Activated naive CD8-positive, alpha-beta T cell treated with anti-CD3 and anti-CD28 coated beads, Interleukin-2, amount 10 ng/mL, durations not matched to agents 7 days and 5 days (primary cell): ENCODE measurements at regions of chr2 and their contacts with region 1.

Region 1: DNA sequence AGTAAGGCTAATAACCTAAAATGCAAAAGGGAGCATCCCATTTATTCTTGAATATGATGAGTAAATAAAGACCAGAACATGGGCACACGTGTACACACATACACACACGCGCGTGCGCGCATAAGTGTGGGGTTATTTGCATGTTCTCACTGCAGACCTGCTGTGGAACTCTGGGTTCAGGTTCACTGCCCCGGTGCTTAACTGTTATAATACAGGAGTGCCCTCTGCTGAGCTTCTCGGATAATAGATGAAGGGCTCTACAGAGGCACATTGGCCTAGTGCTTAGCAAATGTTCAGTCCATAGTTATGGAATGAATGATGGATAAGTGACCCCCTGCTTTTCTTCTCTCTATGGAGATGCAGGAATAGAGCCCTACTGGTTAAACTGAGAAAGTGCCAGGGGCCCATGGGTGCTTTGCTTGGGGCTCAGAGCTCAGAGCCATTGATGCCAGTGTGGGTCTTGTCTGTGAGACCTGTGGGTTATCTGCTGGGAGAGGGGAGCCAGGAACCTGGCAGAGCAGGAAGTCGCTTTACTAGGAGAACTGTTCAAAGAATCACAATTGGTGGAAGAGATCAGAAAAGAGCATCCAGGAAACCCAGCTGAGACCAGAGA is 3.6 kb upstream of the ARL4C start:
- DNase-seq: peak; percentile 63
- ATAC-seq: peak; percentile 51
- H3K4me3 Mint-ChIP-seq: no peak overlapping the region
- H3K27ac Mint-ChIP-seq: peak overlapping the region; percentile 49
- H3K4me1 Mint-ChIP-seq: peaks cover 27% of the 10 kb centered on the region
- H3K27me3 Mint-ChIP-seq: peaks cover 10% of the 10 kb centered on the region

Region 2: DNA sequence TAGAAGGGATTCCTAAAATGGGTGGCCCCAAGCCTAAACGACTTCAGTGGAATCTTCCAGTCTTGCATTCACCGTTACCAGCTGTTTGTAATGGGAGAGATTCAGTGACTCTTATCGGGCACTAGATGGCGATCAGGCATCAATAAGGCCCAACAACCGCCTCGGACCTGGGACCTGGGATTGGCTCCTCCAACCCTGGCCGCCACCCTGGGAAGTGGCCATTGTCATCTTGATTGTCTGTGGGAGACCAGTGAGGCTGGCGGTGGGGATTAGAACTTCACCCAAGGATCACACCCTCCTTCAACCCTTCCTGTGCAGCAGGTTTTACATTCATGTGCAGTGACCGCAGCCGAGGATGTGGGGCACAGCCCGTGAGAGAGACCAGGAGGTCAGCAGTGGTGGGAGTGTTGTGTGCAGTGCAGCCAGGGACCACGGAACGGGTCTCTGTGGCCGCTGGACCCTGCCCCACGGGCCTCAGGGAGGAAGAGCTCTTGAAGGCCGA is 364.7 kb before region 1 on chr2:
- POLR2A ChIA-PET with region 1: interaction called, 13 read pairs
- DNase-seq: peak; percentile 57
- ATAC-seq: peak; percentile 79
- H3K4me3 Mint-ChIP-seq: no peak overlapping the region
- H3K27ac Mint-ChIP-seq: peak overlapping the region; percentile 55
- H3K4me1 Mint-ChIP-seq: peaks cover 14% of the 10 kb centered on the region
- H3K27me3 Mint-ChIP-seq: no peaks in the 10 kb centered on the region

Region 3: DNA sequence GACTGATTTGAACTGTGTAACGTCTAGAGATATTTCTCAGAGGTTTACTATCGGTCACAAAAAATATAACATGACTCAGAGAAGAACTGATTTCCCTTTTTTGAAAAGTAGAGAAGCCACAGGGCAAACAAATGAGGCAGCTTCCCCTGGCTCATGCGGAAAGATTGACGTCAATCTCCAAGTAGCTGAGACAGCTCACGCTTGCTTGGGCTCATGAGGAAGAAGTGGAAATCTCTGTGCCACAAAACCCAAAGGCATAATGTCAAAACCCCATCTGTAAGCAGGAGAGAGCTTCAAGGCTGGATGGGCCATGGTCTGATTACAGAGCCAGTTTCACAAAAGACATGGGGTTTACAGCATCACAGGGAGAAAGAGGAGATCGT is 191.7 kb before region 1 on chr2:
- POLR2A ChIA-PET with region 1: interaction called, 37 read pairs
- DNase-seq: no peak
- ATAC-seq: peak; percentile 90
- H3K4me3 Mint-ChIP-seq: peak overlapping the region; percentile 80
- H3K27ac Mint-ChIP-seq: peak overlapping the region; percentile 97
- H3K4me1 Mint-ChIP-seq: peaks cover 48% of the 10 kb centered on the region
- H3K27me3 Mint-ChIP-seq: no peaks in the 10 kb centered on the region

Region 4: GRCh38 chr2:234374736-234375135 is 125.8 kb before region 1 on chr2:
- POLR2A ChIA-PET with region 1: interaction called, 23 read pairs
- DNase-seq: no peak
- ATAC-seq: no peak
- H3K4me3 Mint-ChIP-seq: no peak overlapping the region
- H3K27ac Mint-ChIP-seq: no peak overlapping the region
- H3K4me1 Mint-ChIP-seq: peaks cover 40% of the 10 kb centered on the region
- H3K27me3 Mint-ChIP-seq: no peaks in the 10 kb centered on the region

Region 5: GRCh38 chr2:234437642-234438304 is 62.7 kb before region 1 on chr2:
- POLR2A ChIA-PET with region 1: interaction called, 13 read pairs
- DNase-seq: no peak
- ATAC-seq: no peak
- H3K4me3 Mint-ChIP-seq: peak overlapping the region; percentile 52
- H3K27ac Mint-ChIP-seq: peak overlapping the region; percentile 77
- H3K4me1 Mint-ChIP-seq: peaks cover 54% of the 10 kb centered on the region
- H3K27me3 Mint-ChIP-seq: no peaks in the 10 kb centered on the region

Region 6: GRCh38 chr2:234463626-234464290 is 36.7 kb before region 1 on chr2:
- POLR2A ChIA-PET with region 1: interaction called, 20 read pairs
- DNase-seq: peak; percentile 49
- ATAC-seq: peak; percentile 74
- H3K4me3 Mint-ChIP-seq: peak overlapping the region; percentile 86
- H3K27ac Mint-ChIP-seq: peak overlapping the region; percentile 90
- H3K4me1 Mint-ChIP-seq: peaks cover 42% of the 10 kb centered on the region
- H3K27me3 Mint-ChIP-seq: peaks cover 3% of the 10 kb centered on the region

Region 7: GRCh38 chr2:234488913-234489451 is 11.5 kb before region 1 on chr2:
- POLR2A ChIA-PET with region 1: interaction called, 12 read pairs
- DNase-seq: peak; percentile 68
- ATAC-seq: peak; percentile 76
- H3K4me3 Mint-ChIP-seq: peak overlapping the region; percentile 97
- H3K27ac Mint-ChIP-seq: peak overlapping the region; percentile 99
- H3K4me1 Mint-ChIP-seq: peaks cover 71% of the 10 kb centered on the region
- H3K27me3 Mint-ChIP-seq: no peaks in the 10 kb centered on the region